ENCODE measurements at regions of chr4 and their contacts with region 1.

Region 1: GRCh38 chr4:86055898-86056297 is 304.0 kb downstream of the MAPK10 start:
- DNase-seq: no peak
- H3K4me3 ChIP-seq: no peak overlapping the region
- H3K27ac ChIP-seq: no peak overlapping the region
- H3K4me1 ChIP-seq: no peaks in the 10 kb centered on the region; a peak in 1 of 4 replicates
- H3K27me3 ChIP-seq: no peaks in the 10 kb centered on the region
- CTCF ChIP-seq: no peak
- EP300 ChIP-seq: no peak
- RAD21 ChIP-seq: no peak

Region 2: DNA sequence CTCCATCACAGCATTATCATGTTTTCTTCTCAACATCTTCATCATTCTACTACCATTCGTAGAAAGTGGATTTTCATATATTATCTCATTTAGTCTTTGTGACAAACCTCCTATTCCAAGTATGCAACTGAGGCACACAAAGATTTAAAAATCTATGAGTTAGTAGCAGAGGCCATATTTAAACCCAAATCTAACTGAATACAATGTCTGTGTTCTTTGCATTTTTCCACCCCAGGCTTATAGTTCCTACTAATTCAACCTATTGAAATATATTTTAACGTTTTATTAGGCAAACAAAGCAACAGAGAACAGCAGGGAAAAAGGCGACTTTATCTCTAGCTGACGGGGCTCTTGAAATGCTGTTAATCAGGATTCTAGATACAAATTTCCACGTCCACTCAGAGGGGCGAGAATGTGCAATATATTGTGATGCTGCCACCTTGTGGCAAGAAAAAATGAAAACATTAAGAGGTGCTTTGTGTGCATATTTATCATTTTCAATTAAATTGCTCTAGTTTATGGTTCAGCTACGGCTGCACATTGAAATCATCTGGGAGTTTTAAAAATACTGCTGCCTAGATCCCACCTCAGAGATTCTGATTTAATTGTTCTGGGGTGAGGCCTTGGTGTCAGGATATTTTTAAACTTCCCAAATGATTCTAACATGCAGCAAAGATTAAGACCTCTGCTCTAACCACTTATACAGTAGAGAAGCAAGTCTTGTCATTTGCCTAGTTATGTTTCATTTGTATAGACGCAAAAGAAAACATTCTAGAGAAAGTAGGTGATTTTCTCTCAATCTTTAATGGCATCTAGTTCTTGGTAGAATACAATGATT is 11.9 kb before region 1 on chr4:
- CTCF ChIA-PET with region 1: interaction called, 24 read pairs
- POLR2A ChIA-PET with region 1: no interaction called
- DNase-seq: peak; percentile 23
- H3K4me3 ChIP-seq: no peak overlapping the region
- H3K27ac ChIP-seq: no peak overlapping the region; a peak in 1 of 4 replicates
- H3K4me1 ChIP-seq: no peaks in the 10 kb centered on the region; a peak in 1 of 4 replicates
- H3K27me3 ChIP-seq: no peaks in the 10 kb centered on the region
- CTCF ChIP-seq: peak; percentile 79
- EP300 ChIP-seq: no peak
- RAD21 ChIP-seq: peak; percentile 87

Region 3: DNA sequence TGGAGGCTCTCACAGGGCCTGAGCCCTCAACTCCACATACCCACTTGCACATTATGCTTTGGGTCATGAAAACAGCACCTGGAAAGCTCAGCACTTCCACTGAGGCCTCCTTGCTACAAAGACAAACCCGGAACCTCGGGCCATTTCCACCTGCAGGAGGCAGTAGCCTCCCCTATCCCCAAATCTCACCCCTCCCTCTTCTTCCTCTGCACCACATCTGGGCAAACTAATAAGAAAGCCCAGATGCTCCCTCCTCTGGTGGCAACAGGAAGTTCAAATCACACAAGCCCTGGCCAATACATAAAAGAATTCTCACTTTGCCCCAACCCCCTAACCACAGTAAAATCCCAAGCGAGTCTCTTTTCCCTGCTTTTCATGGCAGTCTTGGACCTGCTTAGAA is 167.6 kb after region 1 on chr4:
- CTCF ChIA-PET with region 1: no interaction called
- POLR2A ChIA-PET with region 1: no interaction called
- DNase-seq: peak; percentile 11
- H3K4me3 ChIP-seq: no peak overlapping the region
- H3K27ac ChIP-seq: no peak overlapping the region
- H3K4me1 ChIP-seq: peaks cover 0 to 6% of the 10 kb centered on the region in 2 experiments; a peak in 1 of 4 replicates
- H3K27me3 ChIP-seq: no peaks in the 10 kb centered on the region
- CTCF ChIP-seq: peak; percentile 61
- EP300 ChIP-seq: no peak
- RAD21 ChIP-seq: peak; percentile 58

Measured in SK-N-SH (cell line).